Dendritic cell treated with granulocyte-macrophage colony-stimulating factor and Interleukin-4, amounts not matched to agents 40 ng/mL and 50 ng/mL, for 4 days (primary cell): ENCODE measurements at regions of chr1 and their contacts with region 1.

Region 1: GRCh38 chr1:223199094-223199647 is 56.1 kb upstream of the TLR5 start:
- H3K4me3 Mint-ChIP-seq: no peak overlapping the region
- H3K27ac Mint-ChIP-seq: peak overlapping the region; percentile 41
- H3K4me1 Mint-ChIP-seq: peaks cover 72% of the 10 kb centered on the region
- H3K27me3 Mint-ChIP-seq: peaks cover 3% of the 10 kb centered on the region

Region 2: GRCh38 chr1:223223091-223223995 is 24.2 kb after region 1 on chr1:
- intact Hi-C with region 1: no loop called
- H3K4me3 Mint-ChIP-seq: no peak overlapping the region
- H3K27ac Mint-ChIP-seq: no peak overlapping the region
- H3K4me1 Mint-ChIP-seq: peaks cover 10% of the 10 kb centered on the region
- H3K27me3 Mint-ChIP-seq: peaks cover 21% of the 10 kb centered on the region

Region 3: DNA sequence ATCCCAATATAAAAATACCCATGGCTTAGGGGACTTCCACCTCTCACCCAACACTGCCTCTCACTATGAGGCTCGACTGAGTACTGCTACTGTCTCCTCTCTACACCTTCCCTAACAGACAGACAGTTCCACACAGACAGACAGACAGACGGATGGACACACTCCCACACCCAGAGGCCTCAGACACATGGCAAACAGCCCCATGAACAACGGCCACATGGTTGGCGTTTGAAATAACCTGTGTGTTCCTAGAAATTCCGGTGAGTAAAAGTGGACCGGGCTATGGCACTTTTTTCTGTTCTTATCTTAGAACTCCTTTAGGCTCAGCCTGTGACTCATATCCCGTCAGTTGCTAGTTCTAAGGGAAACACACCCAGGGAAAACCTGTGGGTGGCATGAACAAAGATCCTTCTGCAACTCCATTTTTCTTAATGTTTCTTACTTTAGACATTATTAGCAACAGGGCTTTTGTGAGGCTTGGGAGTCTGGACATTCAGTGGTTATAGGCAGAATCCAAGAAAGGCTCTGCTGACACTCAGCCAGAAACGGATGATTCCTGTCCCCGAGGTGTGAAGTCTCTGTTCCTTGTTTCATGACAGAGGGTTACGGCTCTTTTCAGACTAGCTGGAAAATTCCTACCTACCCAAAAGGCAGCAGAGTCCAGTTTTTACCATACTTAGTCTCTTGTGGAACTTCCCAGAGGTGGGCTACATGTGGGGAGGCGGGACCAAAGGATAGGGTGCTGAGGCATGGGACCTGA is 34.4 kb after region 1 on chr1:
- intact Hi-C with region 1: loop called (anchors 5 kb)
- H3K4me3 Mint-ChIP-seq: no peak overlapping the region
- H3K27ac Mint-ChIP-seq: no peak overlapping the region
- H3K4me1 Mint-ChIP-seq: peaks cover 11% of the 10 kb centered on the region
- H3K27me3 Mint-ChIP-seq: peaks cover 10% of the 10 kb centered on the region

Region 4: DNA sequence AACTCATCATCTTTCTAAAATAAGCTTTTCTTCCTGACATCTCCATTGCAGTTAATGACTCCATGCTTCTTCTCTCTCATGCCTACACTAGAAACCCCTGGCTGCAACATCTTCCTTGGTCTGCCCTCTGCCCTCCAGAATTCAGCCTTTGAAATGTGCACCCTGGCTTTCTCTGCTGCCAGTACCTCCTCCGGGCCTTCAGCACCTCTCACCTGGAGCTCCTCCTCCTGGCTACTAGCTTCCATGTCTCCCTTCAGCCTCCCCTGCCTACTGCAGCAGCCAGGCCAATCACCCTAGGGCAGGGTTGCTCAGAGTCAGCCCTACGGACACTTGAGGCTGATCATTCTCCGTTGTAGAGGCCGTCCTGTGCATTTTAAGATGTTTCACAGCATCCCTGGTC is 146.5 kb after region 1 on chr1:
- intact Hi-C with region 1: no loop called
- H3K4me3 Mint-ChIP-seq: no peak overlapping the region
- H3K27ac Mint-ChIP-seq: no peak overlapping the region
- H3K4me1 Mint-ChIP-seq: no peaks in the 10 kb centered on the region
- H3K27me3 Mint-ChIP-seq: peaks cover 13% of the 10 kb centered on the region